Lower lobe of right lung (tissue), 2 donors: ENCODE measurements at regions of chr9 and their contacts with region 1.

Region 1: GRCh38 chr9:136485049-136486045 is 2.5 kb upstream of the SEC16A start:
- DNase-seq: peak; percentile 90
- ATAC-seq: peak; percentile 23 to 24
- H3K4me3 ChIP-seq: no peak overlapping the region
- H3K27ac ChIP-seq: no peak overlapping the region
- H3K4me1 ChIP-seq: peaks cover 29% of the 10 kb centered on the region
- H3K27me3 ChIP-seq: no peaks in the 10 kb centered on the region
- CTCF ChIP-seq: peak; percentile 89

Region 2: DNA sequence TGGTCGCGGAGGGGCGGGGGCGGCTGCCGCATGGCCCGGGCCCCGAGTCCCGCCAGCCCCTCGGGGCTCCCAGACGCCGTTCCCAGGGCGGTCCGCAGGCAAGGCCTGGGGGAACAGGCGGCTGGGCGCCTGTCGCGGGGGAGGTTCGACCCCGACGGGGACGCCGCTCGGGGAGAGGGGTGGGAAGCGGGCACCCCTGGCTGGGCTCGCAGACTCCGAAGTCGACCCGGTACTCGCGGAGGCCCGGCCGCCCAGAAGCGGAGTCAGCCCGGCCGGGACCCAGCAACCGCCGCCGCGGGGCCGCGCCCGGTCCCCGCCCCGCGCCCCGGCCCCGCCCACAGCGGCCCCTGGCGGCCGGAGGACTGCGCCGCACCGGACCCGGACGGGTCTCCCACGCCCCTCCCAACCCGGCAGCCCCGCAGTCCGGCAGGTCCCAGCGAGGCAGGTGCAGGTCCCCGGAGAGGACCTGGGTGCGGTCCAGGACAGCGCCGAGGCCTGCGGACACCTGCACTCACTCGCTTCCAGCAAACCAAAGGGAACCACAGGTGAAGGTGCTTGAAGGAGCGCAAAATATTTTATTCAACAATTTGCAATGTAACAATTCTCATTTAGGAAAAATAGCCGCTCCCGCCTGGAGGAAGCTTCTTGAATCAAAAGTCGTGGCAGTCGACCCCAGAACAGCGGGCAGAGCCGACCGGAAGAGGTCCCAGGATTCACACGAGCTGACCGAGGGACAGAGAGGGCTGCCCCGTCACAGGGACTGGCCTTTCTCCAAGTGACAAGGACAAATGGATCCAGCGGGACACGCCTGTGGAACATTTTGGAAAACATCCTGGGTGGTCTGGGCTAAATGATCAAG is 45.6 kb before region 1 on chr9 and contains the start of gene INPP5E:
- intact Hi-C with region 1: no loop called
- DNase-seq: peak; percentile 80
- ATAC-seq: peak; percentile 90 to 93
- H3K4me3 ChIP-seq: peak within 1 kb of the TSS; percentile 96
- H3K27ac ChIP-seq: peak within 1 kb of the TSS; percentile 78
- H3K4me1 ChIP-seq: peaks cover 32% of the 10 kb centered on the region
- H3K27me3 ChIP-seq: no peaks in the 10 kb centered on the region
- CTCF ChIP-seq: peak; percentile 63
- total RNA-seq, gene INPP5E: 13.8 TPM

Region 3: DNA sequence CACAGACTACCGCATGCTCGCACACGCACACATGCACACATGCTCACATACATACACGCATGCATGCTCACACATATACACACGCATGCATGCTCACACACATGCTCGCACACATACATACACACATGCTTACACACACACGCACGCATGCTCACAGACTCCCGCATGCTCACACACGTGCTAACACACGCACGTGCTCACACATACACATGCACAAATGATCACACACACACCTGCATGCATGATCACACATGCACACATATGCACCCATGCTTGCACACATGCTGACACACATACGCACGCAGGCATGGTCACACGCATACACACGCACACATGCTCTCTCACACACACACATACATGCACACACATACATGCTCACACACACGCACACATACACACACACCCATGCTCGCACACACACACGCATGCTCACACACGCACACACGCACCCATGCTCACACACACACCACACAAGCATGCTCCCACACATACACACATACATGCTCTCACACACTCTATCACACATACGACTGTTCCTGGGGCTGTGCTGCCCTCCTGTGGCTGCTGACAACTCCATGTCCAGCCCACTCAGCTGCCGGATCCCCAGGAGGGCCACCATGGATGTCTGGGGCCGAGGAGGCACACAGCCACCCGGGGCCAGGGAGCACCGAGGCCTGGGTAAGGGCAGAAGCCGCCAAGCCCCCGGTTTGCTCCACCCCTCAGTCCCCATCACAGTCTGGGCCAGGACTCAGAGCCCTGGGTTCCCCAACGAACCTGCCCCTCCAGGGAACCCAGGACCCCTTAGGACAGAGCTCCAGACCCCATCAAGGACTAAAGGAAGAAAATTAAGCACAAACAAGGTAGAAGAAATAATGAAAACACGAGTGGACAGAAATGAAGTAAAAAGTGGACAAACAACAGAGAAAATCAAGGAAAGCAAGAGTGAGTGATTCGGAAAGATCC is 146.0 kb after region 1 on chr9:
- intact Hi-C with region 1: loop called (anchors 5 kb)
- DNase-seq: peak; percentile 88
- ATAC-seq: peak; percentile 90 to 93
- H3K4me3 ChIP-seq: no peak overlapping the region
- H3K27ac ChIP-seq: no peak overlapping the region
- H3K4me1 ChIP-seq: peaks cover 31% of the 10 kb centered on the region
- H3K27me3 ChIP-seq: no peaks in the 10 kb centered on the region
- CTCF ChIP-seq: peak; percentile 90